ENCODE measurements at regions of chr19 and their contacts with region 1.

Region 1: DNA sequence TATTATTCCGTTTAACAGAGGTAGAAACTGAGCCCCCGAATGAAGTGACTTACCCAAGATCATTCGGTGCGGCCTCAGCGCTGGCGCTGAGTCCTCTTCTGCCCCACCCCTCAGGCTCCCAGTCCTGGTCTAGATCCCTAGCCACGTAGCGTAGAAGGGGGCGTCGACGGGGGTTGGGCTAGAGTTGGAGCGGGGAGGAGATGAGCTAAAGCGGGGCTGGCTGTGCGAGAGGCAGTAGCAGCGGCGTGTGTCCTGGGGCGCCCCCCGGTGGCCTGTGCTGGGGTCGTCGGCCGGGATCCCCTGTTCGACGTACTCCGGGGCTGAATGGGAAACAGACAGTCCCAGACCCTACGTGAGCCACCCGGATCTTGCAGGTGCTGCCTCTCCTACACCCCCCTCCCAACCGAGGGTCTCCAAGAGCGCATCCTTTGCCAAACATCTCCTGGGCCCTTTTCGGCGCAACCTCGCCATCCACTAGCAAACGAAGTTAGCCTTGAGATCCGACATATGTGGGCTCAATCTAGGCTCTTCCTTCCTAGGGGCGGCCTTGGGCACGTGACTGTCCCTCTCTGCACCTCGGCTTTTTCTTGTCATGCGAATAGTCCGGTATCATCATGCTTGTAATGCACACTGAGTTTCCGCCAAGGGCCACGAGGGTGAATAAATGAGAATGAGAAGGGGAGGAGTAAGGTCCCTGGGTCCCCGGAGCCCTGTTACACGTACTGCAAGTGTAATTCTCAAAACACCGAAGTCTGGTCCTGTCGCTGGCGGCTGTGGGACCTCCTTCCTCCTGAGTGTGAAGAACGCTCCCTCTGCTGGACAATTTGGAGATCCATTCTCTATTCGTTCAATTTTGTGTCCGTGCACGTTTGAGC is 47.7 kb downstream of the CYP4F22 start:
- DNase-seq: peak; percentile 94

Region 2: GRCh38 chr19:15091901-15092753 is 463.9 kb before region 1 on chr19:
- intact Hi-C with region 1: loop called (anchors 2 kb)
- DNase-seq: no peak

Region 3: GRCh38 chr19:15177269-15178116 is 378.5 kb before region 1 on chr19:
- intact Hi-C with region 1: loop called (anchors 1 kb)
- DNase-seq: peak; percentile 94

Region 4: GRCh38 chr19:15264061-15264932 is 291.7 kb before region 1 on chr19:
- intact Hi-C with region 1: loop called (anchors 1 kb)
- DNase-seq: peak; percentile 87

Region 5: DNA sequence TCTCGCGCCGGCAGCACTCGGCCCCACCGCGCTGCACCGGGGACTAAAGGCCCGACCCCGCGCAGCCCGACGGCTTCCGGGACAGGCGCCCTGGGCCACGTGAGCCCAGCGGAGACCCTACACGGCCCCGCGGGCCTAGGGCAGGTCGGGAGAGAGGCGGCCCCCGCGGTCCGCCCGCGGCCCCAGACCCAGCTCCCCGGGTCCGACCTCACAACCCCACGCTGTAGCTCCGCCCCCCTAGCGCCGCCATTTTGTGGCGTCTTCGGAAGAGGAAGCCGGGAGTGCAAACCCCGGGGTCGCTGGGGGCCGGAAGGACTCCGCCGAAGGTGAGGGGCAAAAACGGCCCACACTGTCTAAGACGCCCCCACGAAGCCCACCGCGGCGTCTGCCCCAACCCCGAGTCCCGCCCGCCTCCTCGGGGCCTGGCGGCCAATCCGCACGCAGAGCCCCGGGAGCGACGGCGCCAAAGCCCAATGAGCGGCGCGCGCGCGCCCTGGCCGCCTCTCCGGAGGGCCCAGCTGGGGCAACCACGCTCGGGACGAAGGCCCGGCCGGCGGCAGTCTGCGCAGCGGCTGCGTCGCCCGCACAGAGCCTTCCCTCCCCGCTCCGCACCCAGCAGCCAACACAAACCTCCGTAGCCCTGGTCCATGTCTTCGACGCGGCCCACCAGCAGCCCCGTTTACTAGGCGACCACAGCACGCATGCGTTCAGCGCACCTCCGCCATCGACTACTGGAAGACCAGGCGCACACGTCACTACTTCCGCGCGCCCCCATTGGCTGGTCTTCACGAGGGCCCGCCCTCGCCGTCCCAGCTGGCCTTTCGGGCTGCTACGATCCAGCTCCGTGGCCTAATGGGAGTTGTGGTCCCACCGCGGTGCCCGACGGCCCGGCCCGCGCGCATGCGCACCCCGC is 176.7 kb before region 1 on chr19 and contains the start of gene AKAP8:
- intact Hi-C with region 1: loop called (anchors 5 kb)
- DNase-seq: peak; percentile 99
- total RNA-seq, gene AKAP8: 19.2 TPM

Region 6: GRCh38 chr19:15449620-15450527 is 106.1 kb before region 1 on chr19 and contains the start of gene WIZ:
- intact Hi-C with region 1: loop called (anchors 10 kb)
- DNase-seq: peak; percentile 92
- total RNA-seq, gene WIZ: 21.6 TPM

Region 7: DNA sequence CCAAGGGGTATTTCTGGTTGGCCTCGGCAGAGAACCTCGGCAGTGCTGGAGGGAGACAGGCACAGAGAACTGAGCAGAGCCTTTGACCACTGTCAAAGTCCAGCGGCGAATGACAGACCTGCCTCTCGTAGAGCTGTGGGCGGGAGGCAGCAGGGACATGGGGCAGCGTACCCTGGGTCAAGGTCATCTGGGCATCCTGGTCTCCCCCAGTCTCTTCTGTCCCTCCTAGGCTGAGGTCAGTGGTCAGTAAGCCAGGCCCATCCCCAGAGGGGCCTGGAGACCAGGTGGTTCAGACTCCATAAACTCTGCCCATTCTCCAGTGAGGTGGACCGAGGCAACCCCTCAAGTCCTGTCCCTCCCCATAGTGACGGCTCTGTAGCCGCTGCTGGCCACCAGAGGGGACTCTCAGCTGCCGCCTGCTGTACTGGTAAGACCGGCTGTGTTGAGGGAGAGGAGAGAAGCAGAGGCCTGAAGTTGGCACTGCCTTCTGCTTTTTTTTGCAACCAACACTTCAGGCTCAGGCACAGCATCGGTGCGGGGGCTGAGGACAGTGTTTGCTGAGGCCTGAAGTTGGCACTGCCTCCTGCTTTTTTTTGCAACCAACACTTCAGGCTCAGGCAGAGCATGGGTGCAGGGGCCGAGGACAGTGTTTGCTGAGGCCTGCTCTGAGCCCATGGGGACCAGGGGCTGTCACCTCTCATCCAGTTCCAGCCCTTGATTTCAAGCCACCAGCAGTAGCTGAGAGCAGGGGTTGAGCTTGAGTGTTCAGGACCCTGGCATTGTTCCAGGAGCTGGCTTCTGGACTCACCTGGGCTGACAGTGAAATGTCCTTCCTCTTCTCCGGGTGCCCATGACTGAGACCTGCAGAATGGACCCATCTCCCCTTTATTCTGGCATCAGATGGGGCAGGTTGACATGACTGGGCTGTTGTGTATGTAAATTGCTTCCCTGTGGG is 76.3 kb before region 1 on chr19 and contains the start of gene PGLYRP2:
- intact Hi-C with region 1: loop called (anchors 5 kb)
- DNase-seq: peak; percentile 47
- total RNA-seq, gene PGLYRP2: not detected

Region 8: GRCh38 chr19:15779756-15780476 is 223.9 kb after region 1 on chr19:
- intact Hi-C with region 1: no loop called
- DNase-seq: peak; percentile 81

Region 9: DNA sequence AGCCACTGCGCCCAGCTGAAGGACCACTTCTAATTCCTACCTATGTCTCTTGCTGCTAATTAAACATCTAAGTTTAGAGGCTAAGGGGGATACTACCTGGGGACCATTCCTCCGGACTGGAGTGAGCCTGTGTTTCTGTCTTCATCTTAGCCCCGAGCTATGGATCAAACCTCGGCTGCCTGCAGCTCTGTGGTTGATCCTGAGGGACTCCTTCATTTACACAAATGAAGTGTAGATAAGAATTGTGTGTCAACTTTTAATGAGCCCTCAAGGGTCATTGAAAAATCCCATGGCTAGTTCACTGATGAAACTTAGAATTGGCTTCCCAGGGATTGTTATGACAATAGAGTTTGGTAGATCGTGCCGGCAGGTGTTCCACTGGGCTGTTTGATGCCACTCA is 290.9 kb after region 1 on chr19:
- intact Hi-C with region 1: no loop called
- DNase-seq: no peak

Measured in cardiac septum (tissue), 1 donor.